ENCODE measurements at regions of chr4 and their contacts with region 1.

Region 1: DNA sequence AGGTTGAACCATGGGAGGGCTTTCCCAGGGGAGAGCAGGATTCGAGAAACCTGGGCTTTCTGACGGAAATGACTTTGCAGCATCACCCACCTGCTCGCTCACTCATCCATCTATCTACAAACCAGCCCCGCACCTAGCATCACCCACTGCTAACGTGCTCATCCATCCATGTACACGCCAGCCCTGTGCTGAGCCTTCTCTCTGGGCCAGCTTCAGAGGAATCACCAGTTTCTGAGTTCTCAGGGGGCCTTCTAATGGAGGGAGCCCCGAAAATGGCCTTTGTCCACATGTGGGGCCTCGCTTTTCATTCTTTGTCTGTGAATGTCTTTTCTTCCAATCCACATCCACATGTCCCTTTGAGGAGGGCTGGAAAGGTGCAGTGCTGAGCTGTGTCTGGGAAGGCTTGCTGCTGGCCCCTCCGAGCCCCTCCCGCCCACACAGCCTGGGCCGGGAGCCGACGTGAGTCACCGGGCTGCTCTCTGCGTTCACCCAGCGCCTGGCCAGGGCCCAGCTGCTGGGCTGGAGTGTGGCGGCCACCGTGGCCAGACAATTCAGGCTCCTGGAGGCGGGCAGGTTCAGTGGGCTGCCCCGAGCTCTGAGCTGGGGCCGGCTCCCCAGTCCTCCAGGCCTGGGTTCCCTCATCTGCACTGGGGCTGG is 14.7 kb downstream of the SORCS2 start:
- DNase-seq: peak; percentile 65 to 86
- H3K4me3 ChIP-seq: no peak overlapping the region; the same call in 1 of the 2 replicates
- H3K27ac ChIP-seq: peak overlapping the region; percentile 95
- H3K4me1 ChIP-seq: peaks cover 64% of the 10 kb centered on the region
- H3K27me3 ChIP-seq: no peaks in the 10 kb centered on the region
- CTCF ChIP-seq: no peak

Region 2: GRCh38 chr4:6802025-6802424 is 405.0 kb before region 1 on chr4:
- CTCF ChIA-PET with region 1: no interaction called
- POLR2A ChIA-PET with region 1: no interaction called
- intact Hi-C with region 1: no loop called
- DNase-seq: no peak
- H3K4me3 ChIP-seq: no peak overlapping the region
- H3K27ac ChIP-seq: no peak overlapping the region
- H3K4me1 ChIP-seq: peaks cover 19% of the 10 kb centered on the region
- H3K27me3 ChIP-seq: no peaks in the 10 kb centered on the region
- CTCF ChIP-seq: no peak

Region 3: DNA sequence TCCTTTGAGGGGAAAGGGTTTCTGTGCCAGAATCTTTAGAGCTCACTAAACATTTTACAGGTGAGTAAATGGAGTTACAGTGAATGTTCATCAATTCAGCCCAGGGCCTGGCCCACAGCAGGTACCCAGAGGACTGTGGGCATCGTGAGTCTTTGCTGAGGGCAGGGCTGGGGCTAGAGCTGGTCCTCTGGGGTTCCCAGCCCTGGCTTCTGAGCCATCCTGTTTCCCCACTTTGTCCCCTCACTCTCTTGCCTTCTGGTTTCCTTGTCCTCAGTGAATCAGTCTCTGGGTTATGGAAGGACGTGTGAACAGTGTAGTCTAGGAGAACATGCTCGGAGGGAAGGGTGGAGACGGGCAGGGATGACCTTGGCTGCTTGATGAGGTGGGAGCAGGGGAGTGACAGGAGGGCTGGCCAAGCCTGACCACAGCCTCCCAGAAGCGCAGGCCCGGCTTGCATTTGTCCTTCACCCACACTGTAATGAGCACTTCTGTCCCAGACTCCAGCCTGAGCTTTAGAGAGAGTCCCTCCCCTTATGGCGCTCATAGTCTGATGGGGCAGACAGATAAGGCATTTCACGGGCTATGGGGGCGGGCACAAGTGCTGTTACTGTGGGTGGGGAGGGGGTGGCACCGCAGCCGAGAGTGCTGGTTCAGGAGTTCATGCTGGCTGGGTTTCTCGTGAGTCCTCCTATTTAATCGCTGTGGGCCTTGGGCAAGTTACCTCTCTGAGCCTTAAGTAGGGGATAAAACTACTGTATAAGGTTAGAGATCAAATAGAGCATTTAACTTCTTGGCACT is 280.2 kb before region 1 on chr4:
- CTCF ChIA-PET with region 1: no interaction called
- POLR2A ChIA-PET with region 1: no interaction called
- intact Hi-C with region 1: no loop called
- DNase-seq: no peak
- H3K4me3 ChIP-seq: no peak overlapping the region
- H3K27ac ChIP-seq: no peak overlapping the region
- H3K4me1 ChIP-seq: no peaks in the 10 kb centered on the region
- H3K27me3 ChIP-seq: no peaks in the 10 kb centered on the region
- CTCF ChIP-seq: no peak

Region 4: GRCh38 chr4:7266525-7267292 is 59.7 kb after region 1 on chr4:
- CTCF ChIA-PET with region 1: no interaction called
- POLR2A ChIA-PET with region 1: interaction called, 6 read pairs
- intact Hi-C with region 1: loop called (anchors 2 kb)
- DNase-seq: peak; percentile 42 to 77
- H3K4me3 ChIP-seq: no peak overlapping the region
- H3K27ac ChIP-seq: peak overlapping the region; percentile 73
- H3K4me1 ChIP-seq: peaks cover 42% of the 10 kb centered on the region
- H3K27me3 ChIP-seq: no peaks in the 10 kb centered on the region
- CTCF ChIP-seq: no peak

Region 5: DNA sequence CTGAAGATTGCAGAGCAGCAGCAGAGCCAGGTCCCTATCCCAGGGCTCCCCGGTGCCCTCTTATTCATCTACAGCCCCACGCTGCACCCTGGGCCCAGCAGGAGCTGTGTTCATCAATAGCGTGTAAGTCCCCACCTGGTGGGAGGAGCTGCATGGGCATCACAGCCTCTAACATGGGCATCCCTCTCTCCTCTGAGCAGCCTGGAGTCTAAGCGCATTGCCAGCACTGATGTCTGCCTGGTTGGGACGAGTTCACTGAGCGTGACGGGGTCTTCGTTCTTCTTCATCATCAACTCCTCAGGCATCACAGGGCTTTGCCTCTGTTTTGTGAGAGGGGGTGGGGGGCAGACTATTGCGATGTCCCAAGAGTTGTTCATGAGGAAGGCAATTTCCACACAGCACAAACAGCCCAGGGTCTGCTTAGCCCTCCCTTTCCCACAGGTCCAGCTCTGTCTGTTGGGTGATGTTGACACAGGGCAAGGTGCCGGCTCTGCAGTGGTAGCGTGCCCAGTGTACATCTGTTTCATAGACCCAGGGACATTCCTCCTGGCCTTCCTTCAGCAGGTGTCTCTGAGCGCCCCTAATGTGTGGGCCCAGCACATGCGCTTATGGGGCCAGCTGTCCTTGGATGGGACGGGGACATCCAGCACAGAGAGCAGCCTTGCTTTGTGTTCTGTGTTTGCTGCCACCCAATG is 71.2 kb after region 1 on chr4:
- CTCF ChIA-PET with region 1: no interaction called
- POLR2A ChIA-PET with region 1: no interaction called
- intact Hi-C with region 1: no loop called
- DNase-seq: no peak
- H3K4me3 ChIP-seq: no peak overlapping the region
- H3K27ac ChIP-seq: no peak overlapping the region
- H3K4me1 ChIP-seq: peaks cover 6% of the 10 kb centered on the region; the same call in 1 of the 2 replicates
- H3K27me3 ChIP-seq: no peaks in the 10 kb centered on the region
- CTCF ChIP-seq: no peak

Region 6: DNA sequence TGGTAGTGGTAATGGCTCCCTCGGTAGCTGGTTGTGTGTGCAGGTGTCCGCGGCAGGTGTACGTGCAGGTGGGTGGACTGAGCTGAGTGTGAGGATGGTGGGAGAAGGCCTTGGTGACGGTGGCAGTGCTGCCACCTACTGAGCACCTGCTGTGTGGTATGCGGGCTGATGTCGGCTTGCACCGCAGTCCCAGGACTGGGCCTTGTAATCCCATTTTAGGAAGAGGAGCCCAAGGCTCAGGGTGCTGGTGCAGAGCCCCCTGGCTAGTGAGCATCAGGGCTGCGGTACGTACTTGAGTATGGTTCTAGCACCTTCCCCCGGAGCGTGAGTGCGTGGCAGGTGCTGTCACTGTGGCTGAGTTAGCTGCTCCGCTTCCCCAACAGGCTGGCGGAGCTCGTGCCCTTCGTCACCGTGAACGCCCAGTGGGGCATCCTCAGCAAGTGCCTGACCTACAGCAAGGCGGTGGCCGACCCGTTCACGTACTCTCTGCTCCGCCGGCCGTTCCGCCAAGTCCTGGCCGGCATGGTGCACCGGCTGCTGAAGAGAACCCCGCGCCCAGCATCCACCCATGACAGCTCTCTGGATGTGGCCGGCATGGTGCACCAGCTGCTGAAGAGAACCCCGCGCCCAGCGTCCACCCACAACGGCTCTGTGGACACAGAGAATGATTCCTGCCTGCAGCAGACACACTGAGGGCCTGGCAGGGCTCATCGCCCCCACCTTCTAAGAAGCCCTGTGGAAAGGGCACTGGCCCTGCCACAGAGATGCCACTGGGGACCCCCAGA is 1379.8 kb after region 1 on chr4:
- CTCF ChIA-PET with region 1: no interaction called
- POLR2A ChIA-PET with region 1: no interaction called
- intact Hi-C with region 1: no loop called
- DNase-seq: no peak
- H3K4me3 ChIP-seq: no peak overlapping the region
- H3K27ac ChIP-seq: no peak overlapping the region
- H3K4me1 ChIP-seq: no peaks in the 10 kb centered on the region
- H3K27me3 ChIP-seq: no peaks in the 10 kb centered on the region
- CTCF ChIP-seq: peak; percentile 38; the same call in 1 of the 2 replicates

Measured in PC-9 (cell line).